Cardiac septum (tissue), 1 donor: ENCODE measurements at regions of chr3 and their contacts with region 1.

Region 1: GRCh38 chr3:38521391-38521987 is 25.3 kb downstream of the EXOG start:
- DNase-seq: no peak

Region 2: GRCh38 chr3:38268526-38268925 is 253.0 kb before region 1 on chr3:
- intact Hi-C with region 1: no loop called
- DNase-seq: no peak

Region 3: GRCh38 chr3:38346587-38347410 is 174.7 kb before region 1 on chr3 and contains the start of gene XYLB:
- intact Hi-C with region 1: no loop called
- DNase-seq: peak; percentile 94
- total RNA-seq, gene XYLB: 0.46 TPM

Region 4: GRCh38 chr3:38843898-38844297 is 322.4 kb after region 1 on chr3:
- intact Hi-C with region 1: loop called (anchors 2 kb)
- DNase-seq: no peak

Region 5: GRCh38 chr3:39000008-39000450 is 478.5 kb after region 1 on chr3:
- intact Hi-C with region 1: loop called (anchors 10 kb)
- DNase-seq: no peak